ENCODE measurements at regions of chr11 and their contacts with region 1.

Region 1: GRCh38 chr11:134253188-134253993 is at the starts of genes ACAD8 and THYN1:
- DNase-seq: peak; percentile 98
- H3K4me3 ChIP-seq: peak within 1 kb of the TSS; percentile 82
- H3K27ac ChIP-seq: peak within 1 kb of the TSS; percentile 25
- H3K4me1 ChIP-seq: peaks cover 17% of the 10 kb centered on the region
- CTCF ChIP-seq: peak; percentile 32; the same call in 1 of the 2 replicates
- total RNA-seq, gene ACAD8: 22.8 and 29.7 TPM in 2 replicates
- total RNA-seq, gene THYN1: 82.8 and 101 TPM in 2 replicates

Region 2: DNA sequence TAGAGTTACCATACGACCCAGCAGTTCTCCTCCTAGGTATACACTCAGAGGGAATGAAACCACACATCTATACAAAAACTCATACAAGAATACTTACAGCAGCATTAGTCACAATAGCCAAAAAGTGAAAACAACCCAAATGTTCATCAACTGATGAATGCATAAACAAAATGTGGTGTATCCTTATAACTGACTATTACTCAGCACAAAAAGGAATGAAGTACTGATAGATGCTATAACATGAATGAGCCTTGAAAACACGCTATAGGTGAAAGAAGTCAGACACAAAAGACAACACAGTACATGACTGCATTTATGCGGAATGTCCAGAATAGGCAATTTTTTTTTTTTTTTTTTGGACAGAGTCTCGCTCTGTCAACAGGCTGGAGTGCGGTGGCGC is 52.7 kb before region 1 on chr11:
- CTCF ChIA-PET with region 1: no interaction called
- POLR2A ChIA-PET with region 1: no interaction called
- intact Hi-C with region 1: no loop called
- DNase-seq: no peak
- H3K4me3 ChIP-seq: no peak overlapping the region
- H3K27ac ChIP-seq: no peak overlapping the region
- H3K4me1 ChIP-seq: no peaks in the 10 kb centered on the region
- CTCF ChIP-seq: no peak

Region 3: GRCh38 chr11:134223836-134224709 is 29.3 kb before region 1 on chr11 and contains the starts of genes NCAPD3 and VPS26B:
- CTCF ChIA-PET with region 1: no interaction called
- POLR2A ChIA-PET with region 1: interaction called, 9 read pairs
- intact Hi-C with region 1: loop called (anchors 1 kb)
- DNase-seq: peak; percentile 97
- H3K4me3 ChIP-seq: peak within 1 kb of the TSS; percentile 97
- H3K27ac ChIP-seq: peak within 1 kb of the TSS; percentile 81
- H3K4me1 ChIP-seq: peaks cover 63% of the 10 kb centered on the region
- CTCF ChIP-seq: no peak
- total RNA-seq, gene NCAPD3: 72.8 and 89.1 TPM in 2 replicates
- total RNA-seq, gene VPS26B: 22.7 and 24.9 TPM in 2 replicates